ENCODE measurements at regions of chr9 and their contacts with region 1.

Region 1: GRCh38 chr9:3732077-3733038 is 206.6 kb upstream of the RFX3 start:
- DNase-seq: peak; percentile 35
- ATAC-seq: peak; percentile 95 to 98

Region 2: GRCh38 chr9:4117835-4118610 is 385.7 kb after region 1 on chr9:
- intact Hi-C with region 1: loop called in 1 of 2 experiments (anchors 10 kb)
- DNase-seq: no peak
- ATAC-seq: no peak

Region 3: GRCh38 chr9:4225291-4226028 is 493.1 kb after region 1 on chr9:
- intact Hi-C with region 1: loop called in 1 of 2 experiments (anchors 2 kb)
- DNase-seq: no peak
- ATAC-seq: no peak

Region 4: DNA sequence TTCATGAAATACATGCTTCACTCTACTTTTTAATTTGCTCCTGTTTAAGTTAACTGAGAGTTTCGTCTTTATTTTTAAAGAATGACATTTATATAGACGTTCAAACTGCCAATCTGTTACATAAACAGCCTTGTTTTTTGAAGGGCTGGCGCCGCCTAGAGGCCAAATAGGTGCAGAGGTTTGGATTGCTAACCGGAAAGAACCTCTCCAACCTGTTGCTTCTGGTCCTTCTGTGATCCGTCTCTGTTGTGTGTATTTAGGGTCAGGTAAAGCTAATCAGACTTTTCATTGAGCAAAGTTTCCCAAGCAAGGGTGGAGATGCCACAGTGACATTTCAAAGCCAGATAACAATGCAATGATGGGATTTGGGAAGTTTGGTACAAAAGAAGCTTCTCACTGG is 607.0 kb after region 1 on chr9:
- intact Hi-C with region 1: loop called in 1 of 2 experiments (anchors 10 kb)
- DNase-seq: peak; percentile 83
- ATAC-seq: peak; percentile 66 to 74

Region 5: GRCh38 chr9:4375424-4376200 is 643.3 kb after region 1 on chr9:
- intact Hi-C with region 1: loop called in 1 of 2 experiments (anchors 10 kb)
- DNase-seq: no peak
- ATAC-seq: peak; percentile 58 to 59